GM12878 (cell line): ENCODE measurements at regions of chr3 and their contacts with region 1.

Region 1: GRCh38 chr3:113825090-113825489 is 13.5 kb upstream of the GRAMD1C start:
- DNase-seq: peak; percentile 86
- ATAC-seq: peak; percentile 85
- H3K4me3 ChIP-seq: peak overlapping the region; percentile 18; the same call in 1 of the 2 replicates
- H3K27ac ChIP-seq: peak overlapping the region; percentile 49; the same call in 1 of the 2 replicates
- H3K4me1 ChIP-seq: peaks cover 41% of the 10 kb centered on the region
- H3K27me3 ChIP-seq: no peaks in the 10 kb centered on the region
- CTCF ChIP-seq: peak in 2 of 3 experiments; percentile 39 to 40; a peak in 2 of 6 replicates
- EP300 ChIP-seq: peak; percentile 34 to 65; a peak in 2 of 4 replicates
- POLR2A ChIP-seq: no peak
- RAD21 ChIP-seq: no peak

Region 2: DNA sequence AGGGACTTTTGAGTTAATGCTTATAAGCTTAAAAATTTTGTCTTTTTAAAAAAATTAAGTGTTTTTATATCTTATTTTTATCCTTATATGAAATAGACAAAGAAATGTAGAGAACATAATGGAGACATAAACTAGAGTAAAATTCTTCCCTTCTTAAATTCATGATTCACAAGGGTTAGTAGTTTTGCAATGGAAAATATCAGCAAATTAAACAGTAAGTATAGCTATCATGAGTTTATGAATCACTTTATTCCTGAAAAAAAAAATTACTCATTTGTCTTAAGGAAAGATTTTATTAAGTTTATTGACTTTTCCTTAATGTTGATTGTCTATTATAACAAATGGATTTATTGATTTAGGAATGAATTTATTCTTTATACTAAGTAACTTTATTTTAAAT is 73.9 kb before region 1 on chr3:
- CTCF ChIA-PET with region 1: interaction called, 72 read pairs
- POLR2A ChIA-PET with region 1: interaction called, 24 read pairs
- RAD21 ChIA-PET with region 1: interaction called, 15 read pairs
- SMC1A ChIA-PET with region 1: interaction called, 10 read pairs
- in situ Hi-C with region 1: no loop called
- intact Hi-C with region 1: loop called (anchors 2 kb)
- DNase-seq: no peak
- ATAC-seq: no peak
- H3K4me3 ChIP-seq: no peak overlapping the region
- H3K27ac ChIP-seq: no peak overlapping the region
- H3K4me1 ChIP-seq: peaks cover 10% of the 10 kb centered on the region; the same call in 1 of the 2 replicates
- H3K27me3 ChIP-seq: no peaks in the 10 kb centered on the region
- CTCF ChIP-seq: no peak
- EP300 ChIP-seq: no peak
- POLR2A ChIP-seq: no peak
- RAD21 ChIP-seq: no peak

Region 3: DNA sequence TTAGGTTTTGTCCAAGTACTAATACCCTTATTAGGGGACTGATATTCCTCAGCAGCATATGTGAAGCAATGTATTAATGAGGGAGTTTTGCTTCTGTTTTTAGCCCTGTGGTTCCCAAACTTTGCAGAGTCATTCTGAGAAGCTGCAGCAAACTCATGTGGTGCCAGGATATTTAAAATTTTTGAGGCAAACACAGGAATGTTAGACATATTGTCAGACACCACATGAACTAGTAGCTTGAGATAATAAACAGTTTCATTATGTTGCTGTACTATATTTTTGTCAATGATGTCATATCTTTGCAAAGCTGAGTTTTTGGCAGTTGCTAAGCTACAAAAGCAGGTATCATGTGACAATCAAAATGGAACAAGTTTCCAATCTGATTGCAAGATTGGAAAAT is 41.6 kb before region 1 on chr3:
- CTCF ChIA-PET with region 1: no interaction called
- POLR2A ChIA-PET with region 1: interaction called, 9 read pairs
- RAD21 ChIA-PET with region 1: interaction called, 5 read pairs
- SMC1A ChIA-PET with region 1: interaction called, 9 read pairs
- in situ Hi-C with region 1: no loop called
- intact Hi-C with region 1: loop called (anchors 5 kb)
- DNase-seq: no peak
- ATAC-seq: peak; percentile 91
- H3K4me3 ChIP-seq: no peak overlapping the region
- H3K27ac ChIP-seq: no peak overlapping the region
- H3K4me1 ChIP-seq: peaks cover 7% of the 10 kb centered on the region
- H3K27me3 ChIP-seq: no peaks in the 10 kb centered on the region
- CTCF ChIP-seq: no peak
- EP300 ChIP-seq: peak in 1 of 2 experiments; percentile 51; a peak in 1 of 4 replicates
- POLR2A ChIP-seq: no peak
- RAD21 ChIP-seq: no peak

Region 4: GRCh38 chr3:113791381-113791780 is 33.7 kb before region 1 on chr3:
- CTCF ChIA-PET with region 1: interaction called, 4 read pairs
- POLR2A ChIA-PET with region 1: interaction called, 9 read pairs
- RAD21 ChIA-PET with region 1: no interaction called
- SMC1A ChIA-PET with region 1: interaction called, 13 read pairs
- in situ Hi-C with region 1: no loop called
- intact Hi-C with region 1: no loop called
- DNase-seq: no peak
- ATAC-seq: no peak
- H3K4me3 ChIP-seq: no peak overlapping the region
- H3K27ac ChIP-seq: no peak overlapping the region
- H3K4me1 ChIP-seq: no peaks in the 10 kb centered on the region
- H3K27me3 ChIP-seq: no peaks in the 10 kb centered on the region
- CTCF ChIP-seq: no peak
- EP300 ChIP-seq: no peak
- POLR2A ChIP-seq: no peak
- RAD21 ChIP-seq: no peak

Region 5: GRCh38 chr3:113802795-113803455 is 22.2 kb before region 1 on chr3:
- CTCF ChIA-PET with region 1: interaction called, 8 read pairs
- POLR2A ChIA-PET with region 1: interaction called, 4 read pairs
- RAD21 ChIA-PET with region 1: interaction called, 8 read pairs
- SMC1A ChIA-PET with region 1: interaction called, 12 read pairs
- in situ Hi-C with region 1: no loop called
- intact Hi-C with region 1: no loop called
- DNase-seq: no peak
- ATAC-seq: peak; percentile 85
- H3K4me3 ChIP-seq: no peak overlapping the region
- H3K27ac ChIP-seq: no peak overlapping the region
- H3K4me1 ChIP-seq: peaks cover 9% of the 10 kb centered on the region
- H3K27me3 ChIP-seq: no peaks in the 10 kb centered on the region
- CTCF ChIP-seq: no peak
- EP300 ChIP-seq: no peak
- POLR2A ChIP-seq: no peak
- RAD21 ChIP-seq: no peak

Region 6: GRCh38 chr3:113838631-113839209 is 13.6 kb after region 1 on chr3 and contains the start of gene GRAMD1C:
- CTCF ChIA-PET with region 1: interaction called, 27 read pairs
- POLR2A ChIA-PET with region 1: interaction called, 5 read pairs
- RAD21 ChIA-PET with region 1: interaction called, 15 read pairs
- SMC1A ChIA-PET with region 1: interaction called, 16 read pairs
- in situ Hi-C with region 1: no loop called
- intact Hi-C with region 1: no loop called
- DNase-seq: peak; percentile 59
- ATAC-seq: peak; percentile 98
- H3K4me3 ChIP-seq: peak within 1 kb of the TSS; percentile 54
- H3K27ac ChIP-seq: no peak within 1 kb of the TSS
- H3K4me1 ChIP-seq: peaks cover 3% of the 10 kb centered on the region; the same call in 1 of the 2 replicates
- H3K27me3 ChIP-seq: no peaks in the 10 kb centered on the region
- CTCF ChIP-seq: peak; percentile 86 to 89 (median 88)
- EP300 ChIP-seq: no peak
- POLR2A ChIP-seq: peak; percentile 40; the same call in 1 of the 2 replicates
- RAD21 ChIP-seq: peak; percentile 75
- polyA plus RNA-seq, gene GRAMD1C: 3.2 to 8.4 TPM